GM12878 (cell line): ENCODE measurements at regions of chr15 and their contacts with region 1.

Region 1: GRCh38 chr15:41493205-41493901 is at the start of gene ITPKA:
- DNase-seq: peak; percentile 30
- ATAC-seq: peak; percentile 80
- H3K4me3 ChIP-seq: peak within 1 kb of the TSS; percentile 73
- H3K27ac ChIP-seq: peak within 1 kb of the TSS; percentile 55
- H3K4me1 ChIP-seq: peaks cover 29% of the 10 kb centered on the region
- H3K27me3 ChIP-seq: peaks cover 7 to 8% of the 10 kb centered on the region in 2 experiments; a peak in 3 of 4 replicates
- CTCF ChIP-seq: no peak
- EP300 ChIP-seq: no peak
- POLR2A ChIP-seq: peak; percentile 76
- RAD21 ChIP-seq: no peak
- polyA plus RNA-seq, gene ITPKA: 0.07 TPM in 1 of 2 experiments, not detected in the other

Region 2: GRCh38 chr15:41483115-41483514 is 10.2 kb before region 1 on chr15:
- CTCF ChIA-PET with region 1: interaction called, 9 read pairs
- POLR2A ChIA-PET with region 1: interaction called, 16 read pairs
- RAD21 ChIA-PET with region 1: interaction called, 15 read pairs
- SMC1A ChIA-PET with region 1: interaction called, 8 read pairs
- in situ Hi-C with region 1: no loop called
- intact Hi-C with region 1: no loop called
- DNase-seq: peak; percentile 57
- ATAC-seq: peak; percentile 97
- H3K4me3 ChIP-seq: no peak overlapping the region
- H3K27ac ChIP-seq: peak overlapping the region; percentile 62
- H3K4me1 ChIP-seq: peaks cover 13% of the 10 kb centered on the region
- H3K27me3 ChIP-seq: no peaks in the 10 kb centered on the region
- CTCF ChIP-seq: no peak
- EP300 ChIP-seq: 0 out of 4 replicates have a peak, but pooled peaks of 1 of the 2 experiments have one; percentile 56
- POLR2A ChIP-seq: no peak
- RAD21 ChIP-seq: no peak

Region 3: GRCh38 chr15:41536866-41537265 is 43.5 kb after region 1 on chr15:
- CTCF ChIA-PET with region 1: no interaction called
- POLR2A ChIA-PET with region 1: no interaction called
- RAD21 ChIA-PET with region 1: no interaction called
- SMC1A ChIA-PET with region 1: no interaction called
- in situ Hi-C with region 1: no loop called
- intact Hi-C with region 1: no loop called
- DNase-seq: no peak
- ATAC-seq: no peak
- H3K4me3 ChIP-seq: no peak overlapping the region
- H3K27ac ChIP-seq: no peak overlapping the region
- H3K4me1 ChIP-seq: no peaks in the 10 kb centered on the region
- H3K27me3 ChIP-seq: no peaks in the 10 kb centered on the region
- CTCF ChIP-seq: no peak
- EP300 ChIP-seq: no peak
- POLR2A ChIP-seq: no peak
- RAD21 ChIP-seq: no peak

Region 4: GRCh38 chr15:41695750-41696426 is 202.5 kb after region 1 on chr15:
- CTCF ChIA-PET with region 1: no interaction called
- POLR2A ChIA-PET with region 1: interaction called, 13 read pairs
- RAD21 ChIA-PET with region 1: no interaction called
- SMC1A ChIA-PET with region 1: interaction called, 3 read pairs
- in situ Hi-C with region 1: no loop called
- intact Hi-C with region 1: no loop called
- DNase-seq: peak; percentile 39
- ATAC-seq: peak; percentile 97
- H3K4me3 ChIP-seq: no peak overlapping the region
- H3K27ac ChIP-seq: no peak overlapping the region
- H3K4me1 ChIP-seq: peaks cover 6% of the 10 kb centered on the region; the same call in 1 of the 2 replicates
- H3K27me3 ChIP-seq: no peaks in the 10 kb centered on the region
- CTCF ChIP-seq: peak; percentile 39 to 63 (median 52); a peak in 5 of 6 replicates
- EP300 ChIP-seq: no peak
- POLR2A ChIP-seq: no peak
- RAD21 ChIP-seq: peak; percentile 57